T-cell (primary cell): ENCODE measurements at regions of chr1 and their contacts with region 1.

Region 1: GRCh38 chr1:7893529-7894180 is 40.8 kb upstream of the UTS2 start:
- DNase-seq: no peak
- ATAC-seq: no peak
- H3K4me3 ChIP-seq: no peak overlapping the region
- H3K4me3 Mint-ChIP-seq: no peak overlapping the region
- H3K27ac ChIP-seq: no peak overlapping the region
- H3K27ac Mint-ChIP-seq: no peak overlapping the region
- H3K4me1 ChIP-seq: peaks cover 0 to 6% of the 10 kb centered on the region in 2 experiments
- H3K4me1 Mint-ChIP-seq: peaks cover 0 to 14% (median 0%) of the 10 kb centered on the region in 3 donors
- H3K27me3 ChIP-seq: peaks cover 0 to 13% of the 10 kb centered on the region in 2 experiments
- H3K27me3 Mint-ChIP-seq: peaks cover 0 to 12% of the 10 kb centered on the region in 2 donors

Region 2: DNA sequence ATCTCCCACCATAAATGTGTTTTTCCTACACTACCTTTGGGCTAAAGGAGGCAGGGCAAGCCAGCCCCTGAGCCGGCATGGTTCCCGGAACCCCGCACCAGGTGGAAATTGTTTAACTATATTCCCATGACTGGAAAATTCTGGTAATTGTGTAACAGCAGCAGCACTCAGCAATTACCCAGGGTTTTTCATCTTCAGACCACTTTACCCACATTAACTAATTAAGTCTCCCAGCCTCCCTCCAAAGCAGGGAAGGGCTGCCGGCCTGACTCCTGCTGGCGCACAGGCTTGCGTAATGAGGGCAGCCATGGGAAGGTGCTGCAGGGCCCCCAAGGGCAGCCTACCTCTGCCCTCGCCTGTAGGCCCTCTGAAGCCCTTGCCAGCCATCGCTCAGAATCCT is 263.3 kb before region 1 on chr1:
- CTCF ChIA-PET with region 1: no interaction called
- POLR2A ChIA-PET with region 1: no interaction called
- DNase-seq: no peak
- ATAC-seq: no peak
- H3K4me3 ChIP-seq: no peak overlapping the region
- H3K4me3 Mint-ChIP-seq: no peak overlapping the region
- H3K27ac ChIP-seq: no peak overlapping the region
- H3K27ac Mint-ChIP-seq: no peak overlapping the region
- H3K4me1 ChIP-seq: no peaks in the 10 kb centered on the region
- H3K4me1 Mint-ChIP-seq: no peaks in the 10 kb centered on the region
- H3K27me3 ChIP-seq: peaks cover 0 to 60% of the 10 kb centered on the region in 2 experiments
- H3K27me3 Mint-ChIP-seq: peaks cover 29 to 49% of the 10 kb centered on the region in 2 donors

Region 3: GRCh38 chr1:7833035-7833434 is 60.6 kb before region 1 on chr1:
- CTCF ChIA-PET with region 1: no interaction called
- POLR2A ChIA-PET with region 1: no interaction called
- DNase-seq: no peak
- ATAC-seq: no peak
- H3K4me3 ChIP-seq: no peak overlapping the region
- H3K4me3 Mint-ChIP-seq: no peak overlapping the region
- H3K27ac ChIP-seq: no peak overlapping the region
- H3K27ac Mint-ChIP-seq: no peak overlapping the region
- H3K4me1 ChIP-seq: peaks cover 0 to 4% of the 10 kb centered on the region in 2 experiments
- H3K4me1 Mint-ChIP-seq: peaks cover 0 to 15% (median 2%) of the 10 kb centered on the region in 3 donors
- H3K27me3 ChIP-seq: no peaks in the 10 kb centered on the region
- H3K27me3 Mint-ChIP-seq: no peaks in the 10 kb centered on the region

Region 4: GRCh38 chr1:8211589-8212442 is 318.2 kb after region 1 on chr1:
- CTCF ChIA-PET with region 1: no interaction called
- POLR2A ChIA-PET with region 1: interaction called in 1 of 2 experiments, 15 read pairs
- DNase-seq: no peak
- ATAC-seq: no peak
- H3K4me3 ChIP-seq: no peak overlapping the region
- H3K4me3 Mint-ChIP-seq: peak overlapping the region in 2 of 3 donors; percentile 21 to 34
- H3K27ac ChIP-seq: no peak overlapping the region
- H3K27ac Mint-ChIP-seq: no peak overlapping the region
- H3K4me1 ChIP-seq: peaks cover 0 to 6% of the 10 kb centered on the region in 2 experiments
- H3K4me1 Mint-ChIP-seq: peaks cover 9 to 16% (median 9%) of the 10 kb centered on the region in 3 donors
- H3K27me3 ChIP-seq: peaks cover 11 to 58% of the 10 kb centered on the region in 2 experiments
- H3K27me3 Mint-ChIP-seq: peaks cover 39 to 43% of the 10 kb centered on the region in 2 donors